ENCODE measurements at regions of chr4 and their contacts with region 1.

Region 1: GRCh38 chr4:184474263-184475095 is at the start of gene IRF2:
- DNase-seq: peak; percentile 92 to 99 (median 96)
- ATAC-seq: peak; percentile 81
- H3K4me3 ChIP-seq: peak within 1 kb of the TSS; percentile 99
- H3K4me3 Mint-ChIP-seq: peak within 1 kb of the TSS; percentile 98
- H3K27ac ChIP-seq: peak within 1 kb of the TSS; percentile 87 to 95
- H3K27ac Mint-ChIP-seq: peak within 1 kb of the TSS; percentile 98
- H3K4me1 ChIP-seq: peaks cover 51% of the 10 kb centered on the region
- H3K4me1 Mint-ChIP-seq: peaks cover 65% of the 10 kb centered on the region
- H3K27me3 ChIP-seq: no peaks in the 10 kb centered on the region
- H3K27me3 Mint-ChIP-seq: no peaks in the 10 kb centered on the region
- CTCF ChIP-seq: no peak
- total RNA-seq, gene IRF2: 11.4 to 14.9 TPM

Region 2: DNA sequence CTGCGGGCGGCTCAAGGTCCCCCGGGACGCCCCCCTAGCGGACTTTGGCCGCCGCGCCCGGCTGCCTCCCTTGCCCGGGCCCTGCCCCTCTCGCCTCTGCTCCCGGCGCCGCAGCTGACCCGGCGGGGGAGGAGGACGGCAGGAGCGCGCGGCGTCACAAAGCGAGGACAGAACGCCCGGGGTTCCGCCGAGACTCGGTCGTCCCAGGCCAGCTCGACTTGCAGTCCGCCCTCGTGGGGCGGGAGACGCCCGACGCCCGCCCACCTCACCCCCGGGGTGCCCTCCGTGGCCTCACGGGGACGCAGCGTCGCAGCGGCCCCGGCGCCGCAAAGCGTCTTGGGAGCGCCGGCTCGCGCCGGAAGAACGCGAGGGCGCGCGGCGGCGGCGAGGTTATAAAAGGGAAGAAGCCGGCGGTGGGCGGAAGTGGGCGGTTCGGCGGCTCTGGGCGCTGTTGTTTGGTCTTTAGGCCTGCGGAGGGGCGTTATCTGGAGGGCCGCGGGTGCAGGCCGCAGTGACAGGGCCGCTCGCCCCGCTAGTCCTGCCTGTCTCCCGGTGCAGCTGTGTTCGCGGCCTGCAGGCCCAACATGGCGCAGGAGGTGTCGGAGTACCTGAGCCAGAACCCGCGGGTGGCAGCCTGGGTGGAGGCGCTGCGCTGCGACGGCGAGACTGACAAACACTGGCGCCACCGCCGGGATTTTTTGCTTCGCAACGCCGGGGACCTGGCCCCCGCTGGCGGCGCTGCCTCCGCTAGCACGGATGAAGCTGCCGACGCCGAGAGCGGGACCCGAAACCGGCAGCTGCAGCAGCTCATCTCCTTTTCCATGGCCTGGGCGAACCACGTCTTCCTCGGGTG is 1030.0 kb before region 1 on chr4 and contains the start of gene CDKN2AIP:
- CTCF ChIA-PET with region 1: no interaction called
- POLR2A ChIA-PET with region 1: interaction called, 11 read pairs
- intact Hi-C with region 1: loop called in 1 of 2 experiments (anchors 5 kb)
- DNase-seq: peak; percentile 89 to 98 (median 94)
- ATAC-seq: peak; percentile 82
- H3K4me3 ChIP-seq: peak within 1 kb of the TSS; percentile 94
- H3K4me3 Mint-ChIP-seq: peak within 1 kb of the TSS; percentile 98
- H3K27ac ChIP-seq: peak within 1 kb of the TSS; percentile 91
- H3K27ac Mint-ChIP-seq: peak within 1 kb of the TSS; percentile 96
- H3K4me1 ChIP-seq: peaks cover 26% of the 10 kb centered on the region
- H3K4me1 Mint-ChIP-seq: peaks cover 55% of the 10 kb centered on the region
- H3K27me3 ChIP-seq: no peaks in the 10 kb centered on the region
- H3K27me3 Mint-ChIP-seq: no peaks in the 10 kb centered on the region
- CTCF ChIP-seq: no peak
- total RNA-seq, gene CDKN2AIP: 55.7 to 56.9 TPM

Region 3: GRCh38 chr4:184417802-184418511 is 56.5 kb before region 1 on chr4:
- CTCF ChIA-PET with region 1: no interaction called
- POLR2A ChIA-PET with region 1: interaction called, 31 read pairs
- intact Hi-C with region 1: loop called (anchors 1 to 2 kb)
- DNase-seq: peak in 4 of 14 experiments; percentile 28 to 74 (median 64)
- ATAC-seq: peak; percentile 58
- H3K4me3 ChIP-seq: peak overlapping the region; percentile 53
- H3K4me3 Mint-ChIP-seq: peak overlapping the region; percentile 79
- H3K27ac ChIP-seq: peak overlapping the region; percentile 66 to 78
- H3K27ac Mint-ChIP-seq: peak overlapping the region; percentile 92
- H3K4me1 ChIP-seq: peaks cover 72% of the 10 kb centered on the region
- H3K4me1 Mint-ChIP-seq: peaks cover 75% of the 10 kb centered on the region
- H3K27me3 ChIP-seq: no peaks in the 10 kb centered on the region
- H3K27me3 Mint-ChIP-seq: no peaks in the 10 kb centered on the region
- CTCF ChIP-seq: no peak

Region 4: GRCh38 chr4:184459413-184459812 is 15.1 kb before region 1 on chr4:
- CTCF ChIA-PET with region 1: no interaction called
- POLR2A ChIA-PET with region 1: interaction called, 11 read pairs
- intact Hi-C with region 1: no loop called
- DNase-seq: no peak
- ATAC-seq: peak; percentile 71
- H3K4me3 ChIP-seq: no peak overlapping the region
- H3K4me3 Mint-ChIP-seq: peak overlapping the region; percentile 31
- H3K27ac ChIP-seq: peak overlapping the region in 1 of 2 donors; percentile 2
- H3K27ac Mint-ChIP-seq: peak overlapping the region; percentile 73
- H3K4me1 ChIP-seq: peaks cover 48% of the 10 kb centered on the region
- H3K4me1 Mint-ChIP-seq: peaks cover 92% of the 10 kb centered on the region
- H3K27me3 ChIP-seq: no peaks in the 10 kb centered on the region
- H3K27me3 Mint-ChIP-seq: no peaks in the 10 kb centered on the region
- CTCF ChIP-seq: no peak

Region 5: GRCh38 chr4:184538023-184538599 is 63.6 kb after region 1 on chr4:
- CTCF ChIA-PET with region 1: interaction called, 7 read pairs
- POLR2A ChIA-PET with region 1: interaction called, 233 read pairs
- intact Hi-C with region 1: loop called (anchors 1 to 2 kb)
- DNase-seq: peak; percentile 41 to 87 (median 58)
- ATAC-seq: peak; percentile 41
- H3K4me3 ChIP-seq: peak overlapping the region; percentile 82
- H3K4me3 Mint-ChIP-seq: peak overlapping the region; percentile 96
- H3K27ac ChIP-seq: peak overlapping the region; percentile 87 to 96
- H3K27ac Mint-ChIP-seq: peak overlapping the region; percentile 99
- H3K4me1 ChIP-seq: peaks cover 29% of the 10 kb centered on the region
- H3K4me1 Mint-ChIP-seq: peaks cover 50% of the 10 kb centered on the region
- H3K27me3 ChIP-seq: no peaks in the 10 kb centered on the region
- H3K27me3 Mint-ChIP-seq: no peaks in the 10 kb centered on the region
- CTCF ChIP-seq: peak; percentile 63

Region 6: DNA sequence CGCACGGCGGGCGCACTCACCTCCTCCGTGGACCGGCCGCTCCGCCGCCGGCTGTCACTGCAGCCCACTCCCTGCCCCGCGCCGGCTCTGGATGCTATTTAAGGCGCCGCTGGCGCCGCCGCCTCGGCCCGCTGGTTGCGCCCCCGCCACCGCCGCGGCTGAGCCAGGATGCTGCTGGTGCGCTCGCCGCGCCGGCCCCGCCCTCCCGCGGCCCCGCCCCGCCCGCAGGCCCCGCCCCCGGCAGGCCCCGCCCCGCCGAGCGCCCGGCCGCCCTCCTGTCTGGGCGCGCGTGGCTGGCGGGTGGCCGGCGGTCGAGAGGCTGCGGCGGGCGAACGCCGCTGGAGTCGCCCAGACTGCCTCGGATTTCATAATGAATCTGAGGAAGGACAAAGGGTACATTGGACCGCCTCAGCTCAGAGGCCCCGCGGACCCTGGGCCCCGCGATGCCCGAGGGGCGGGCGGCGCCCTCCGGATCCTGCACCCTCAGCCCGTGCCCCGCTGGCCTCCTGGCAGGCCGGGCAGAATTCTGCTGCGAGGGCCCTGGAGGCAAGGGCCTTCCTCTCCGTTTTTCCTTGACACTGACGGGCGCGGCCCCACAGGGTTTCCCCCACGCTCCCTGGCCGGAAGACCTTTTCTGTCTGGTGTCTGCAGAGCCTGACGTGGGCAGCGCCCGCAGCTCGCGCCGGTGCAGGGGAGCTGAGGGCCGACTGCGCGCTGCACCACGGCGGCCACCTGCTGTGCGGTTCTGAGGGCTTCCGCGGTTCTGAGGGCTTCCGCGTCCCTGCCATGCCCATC is 351.6 kb after region 1 on chr4 and contains the start of gene ACSL1:
- CTCF ChIA-PET with region 1: no interaction called
- POLR2A ChIA-PET with region 1: no interaction called
- intact Hi-C with region 1: loop called in 1 of 2 experiments (anchors 10 kb)
- DNase-seq: peak; percentile 58 to 90 (median 72)
- ATAC-seq: peak; percentile 85
- H3K4me3 ChIP-seq: peak within 1 kb of the TSS; percentile 59
- H3K4me3 Mint-ChIP-seq: peak within 1 kb of the TSS; percentile 97
- H3K27ac ChIP-seq: peak within 1 kb of the TSS in 1 of 2 donors; percentile 31
- H3K27ac Mint-ChIP-seq: peak within 1 kb of the TSS; percentile 92
- H3K4me1 ChIP-seq: peaks cover 23% of the 10 kb centered on the region
- H3K4me1 Mint-ChIP-seq: peaks cover 40% of the 10 kb centered on the region
- H3K27me3 ChIP-seq: no peaks in the 10 kb centered on the region
- H3K27me3 Mint-ChIP-seq: no peaks in the 10 kb centered on the region
- CTCF ChIP-seq: no peak
- total RNA-seq, gene ACSL1: 12.4 to 12.5 TPM